ENCODE measurements at regions of chr17 and their contacts with region 1.

Region 1: DNA sequence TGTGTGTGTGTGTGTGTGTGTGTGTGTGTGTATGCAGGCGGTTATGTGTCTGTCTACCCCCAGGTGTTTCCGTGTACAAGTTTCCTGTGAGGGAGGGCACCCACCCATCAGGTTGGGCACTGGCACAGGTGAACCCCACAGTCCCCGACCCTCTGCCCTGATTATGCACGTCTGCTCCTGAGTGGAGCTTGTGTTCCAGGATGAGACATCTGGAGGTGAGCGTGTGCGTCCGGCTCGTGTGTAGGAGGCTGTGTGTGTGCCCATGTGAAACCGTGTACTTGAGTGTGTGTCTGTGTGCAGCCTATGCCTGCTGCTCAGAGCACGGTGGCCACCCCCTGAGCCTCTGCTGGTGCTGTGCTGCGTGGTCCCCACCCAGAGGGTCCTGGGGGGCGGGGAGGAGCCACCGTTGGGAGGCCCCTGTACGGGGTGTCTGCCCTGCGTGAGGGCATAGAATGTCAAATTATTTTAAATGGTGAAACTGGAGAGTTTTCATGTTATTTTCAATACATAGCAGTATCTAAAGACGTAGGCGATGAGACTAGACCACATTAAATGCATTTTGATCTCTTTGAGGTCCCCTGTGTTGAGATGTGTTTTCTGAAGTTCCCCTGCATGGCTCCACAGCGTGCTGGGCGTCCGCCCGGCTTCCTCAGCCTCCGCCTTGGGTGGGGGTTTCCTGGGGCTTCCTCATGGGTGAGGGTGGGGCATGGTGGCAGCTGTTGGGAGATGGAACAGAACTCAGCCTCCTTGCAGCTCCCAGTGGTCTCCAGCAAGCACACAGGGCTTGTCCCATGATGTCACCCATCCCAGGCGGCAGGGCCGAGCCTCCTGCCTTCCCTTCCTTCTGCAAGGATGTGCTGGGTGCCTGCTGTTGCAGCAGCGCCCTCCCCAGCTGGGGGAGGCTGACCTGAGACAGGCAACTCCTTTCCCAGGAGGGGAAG is 43.4 kb downstream of the KCNJ12 start:
- ATAC-seq: peak in 6 of 8 experiments; percentile 14 to 83 (median 66)
- H3K4me3 ChIP-seq: no peak overlapping the region
- H3K27ac ChIP-seq: no peak overlapping the region
- H3K4me1 ChIP-seq: peaks cover 0 to 3% of the 10 kb centered on the region in 2 donors

Region 2: DNA sequence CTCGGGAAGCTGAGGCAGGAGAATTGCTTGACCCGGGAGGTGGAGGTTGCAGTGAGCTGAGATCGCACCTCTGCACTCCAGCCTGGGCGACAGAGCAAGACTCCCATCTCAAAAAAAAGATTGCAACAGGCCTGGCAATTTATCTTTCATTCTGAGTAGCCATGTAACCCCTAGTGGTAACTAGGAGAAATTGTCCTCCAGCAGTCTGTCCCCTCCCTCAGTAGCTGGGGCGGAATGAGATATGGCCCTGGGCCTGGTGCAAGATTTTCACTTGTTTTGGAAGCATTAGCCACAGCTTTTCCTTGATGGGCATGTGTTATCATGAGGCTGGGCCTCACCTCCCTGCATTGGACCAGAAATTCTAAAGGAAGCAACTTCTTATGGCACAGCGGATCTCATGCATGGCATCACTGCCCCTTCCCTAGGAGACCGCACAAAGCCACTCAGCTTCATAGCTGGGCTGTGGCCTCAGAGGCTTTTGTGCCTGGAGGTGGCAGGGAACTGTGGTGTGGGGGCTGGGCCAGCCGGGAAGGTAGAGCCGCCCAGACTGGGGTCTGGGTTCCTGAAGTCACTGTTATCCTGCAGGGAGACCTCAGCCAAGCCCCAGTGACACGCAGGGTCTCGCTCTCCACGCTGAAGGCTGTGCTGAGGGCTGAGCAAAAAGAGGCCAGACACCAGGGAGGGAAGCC is 179.7 kb before region 1 on chr17:
- in situ Hi-C with region 1: no loop called
- ATAC-seq: peak; percentile 10 to 62 (median 27)
- H3K4me3 ChIP-seq: no peak overlapping the region
- H3K27ac ChIP-seq: no peak overlapping the region
- H3K4me1 ChIP-seq: peaks cover 16 to 24% of the 10 kb centered on the region in 2 donors

Region 3: GRCh38 chr17:21330436-21331160 is 89.0 kb before region 1 on chr17:
- in situ Hi-C with region 1: no loop called
- ATAC-seq: no peak
- H3K4me3 ChIP-seq: no peak overlapping the region
- H3K27ac ChIP-seq: no peak overlapping the region
- H3K4me1 ChIP-seq: no peaks in the 10 kb centered on the region

Region 4: GRCh38 chr17:21705021-21705601 is 285.5 kb after region 1 on chr17:
- in situ Hi-C with region 1: loop called in 1 of 9 experiments (anchors 25 kb)
- ATAC-seq: no peak
- H3K4me3 ChIP-seq: no peak overlapping the region
- H3K27ac ChIP-seq: no peak overlapping the region
- H3K4me1 ChIP-seq: no peaks in the 10 kb centered on the region

Region 5: DNA sequence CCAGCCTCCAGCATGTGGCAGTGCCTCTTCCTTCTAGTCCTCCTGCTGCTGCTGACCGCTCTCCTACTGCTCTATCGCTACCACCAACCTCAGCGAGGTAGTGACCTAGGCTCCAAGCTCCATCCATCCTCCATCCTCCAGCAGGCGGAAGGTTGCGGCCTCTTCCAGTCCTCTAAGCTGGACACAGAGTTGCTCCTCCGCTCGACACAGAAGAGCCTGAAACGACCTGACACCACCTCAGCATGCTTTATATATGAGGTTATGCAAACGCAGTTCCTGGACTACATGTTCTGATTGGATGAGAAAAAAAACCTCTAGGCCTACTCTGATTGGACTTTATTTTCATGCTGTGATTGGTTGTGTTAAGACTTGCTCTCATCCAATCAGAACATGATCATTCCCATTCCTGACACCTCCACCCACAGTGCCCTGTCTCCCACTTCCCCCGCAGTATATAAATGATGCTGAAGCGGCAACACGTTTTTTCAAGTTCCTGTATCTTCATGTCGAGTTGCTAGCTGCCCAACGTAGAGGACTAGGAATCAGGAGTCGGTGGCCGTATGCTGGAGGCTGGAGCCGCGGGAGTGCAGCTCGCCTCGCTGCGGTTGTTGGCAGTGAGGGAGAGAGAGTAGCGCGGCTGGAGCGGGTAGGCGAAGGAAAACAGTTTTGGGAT is 670.8 kb after region 1 on chr17:
- in situ Hi-C with region 1: no loop called
- ATAC-seq: no peak
- H3K4me3 ChIP-seq: no peak overlapping the region
- H3K27ac ChIP-seq: no peak overlapping the region
- H3K4me1 ChIP-seq: no peaks in the 10 kb centered on the region

Measured in motor neuron (in vitro differentiated cells).